ENCODE measurements at regions of chr5 and their contacts with region 1.

Region 1: GRCh38 chr5:58582803-58583491 is at the start of gene RAB3C:
- DNase-seq: peak; percentile 85 to 87 (median 86)
- H3K4me3 ChIP-seq: peak within 1 kb of the TSS; percentile 66 to 90 (median 81)
- H3K4me3 Mint-ChIP-seq: peak within 1 kb of the TSS; percentile 96 to 99
- H3K27ac ChIP-seq: no peak within 1 kb of the TSS
- H3K27ac Mint-ChIP-seq: peak within 1 kb of the TSS in 4 of 7 donors; percentile 11 to 85 (median 53)
- H3K4me1 ChIP-seq: peaks cover 18 to 24% of the 10 kb centered on the region in 2 donors
- H3K4me1 Mint-ChIP-seq: peaks cover 22% of the 10 kb centered on the region
- H3K27me3 ChIP-seq: peaks cover 42 to 56% of the 10 kb centered on the region in 2 donors
- H3K27me3 Mint-ChIP-seq: peaks cover 33 to 51% (median 39%) of the 10 kb centered on the region in 3 donors
- CTCF ChIP-seq: no peak
- polyA plus RNA-seq, gene RAB3C: under 0.01 to 0.81 TPM in 2 of 3 donors, not detected in the other

Region 2: DNA sequence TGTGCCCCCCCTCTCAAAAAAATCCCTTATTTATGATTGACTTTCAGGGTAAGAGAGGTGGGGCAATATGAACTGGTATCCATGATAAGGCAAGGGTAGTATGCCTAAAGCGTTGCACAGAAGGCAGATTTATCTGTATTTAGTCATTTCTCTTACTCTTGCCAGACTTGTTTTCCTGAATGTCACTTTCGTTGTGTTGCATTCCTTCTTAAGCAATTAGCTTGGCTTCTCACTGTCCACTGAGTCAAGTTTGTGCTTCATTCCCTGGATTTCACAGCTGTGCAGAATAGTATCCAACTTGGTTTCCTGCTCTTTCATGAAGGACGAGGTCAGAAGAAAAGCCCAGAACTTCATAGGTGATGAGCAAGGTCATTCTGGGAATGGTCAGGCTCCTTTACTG is 798.8 kb before region 1 on chr5:
- intact Hi-C with region 1: no loop called
- DNase-seq: no peak
- H3K4me3 ChIP-seq: no peak overlapping the region
- H3K4me3 Mint-ChIP-seq: no peak overlapping the region
- H3K27ac ChIP-seq: no peak overlapping the region
- H3K27ac Mint-ChIP-seq: no peak overlapping the region
- H3K4me1 ChIP-seq: no peaks in the 10 kb centered on the region
- H3K4me1 Mint-ChIP-seq: no peaks in the 10 kb centered on the region
- H3K27me3 ChIP-seq: no peaks in the 10 kb centered on the region
- H3K27me3 Mint-ChIP-seq: peaks cover 0 to 4% (median 3%) of the 10 kb centered on the region in 3 donors
- CTCF ChIP-seq: no peak

Region 3: DNA sequence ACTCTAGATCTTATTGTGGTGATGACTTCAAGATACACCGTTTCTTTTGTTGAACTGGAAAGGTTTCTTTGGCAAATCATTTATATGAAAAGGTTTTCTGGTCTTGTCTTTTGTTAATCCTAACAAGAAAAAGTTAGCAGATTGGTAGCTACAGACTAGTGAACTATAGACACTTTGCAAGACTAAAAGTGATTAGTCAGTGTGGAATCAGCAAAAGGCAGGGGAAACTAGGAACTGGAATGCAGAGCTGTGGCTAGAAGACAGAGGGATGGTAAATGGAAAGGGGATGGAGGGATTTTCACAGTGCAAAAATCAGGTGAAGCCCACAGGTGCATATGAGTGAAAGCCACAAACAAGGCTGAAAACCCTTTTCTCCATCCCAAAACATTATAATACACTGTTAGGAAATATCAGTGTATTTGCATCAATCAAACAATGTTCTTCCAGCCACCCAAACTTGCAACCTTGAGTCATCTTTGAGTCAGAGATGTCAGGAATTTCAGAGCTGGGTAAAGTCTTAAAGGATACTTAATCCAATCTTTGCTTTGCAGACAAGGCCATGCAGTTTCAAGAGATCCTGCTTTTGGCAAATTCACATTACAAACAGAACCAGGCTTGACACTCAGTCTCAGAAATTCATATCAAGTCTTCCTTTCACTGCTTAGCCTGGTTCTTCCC is 175.8 kb before region 1 on chr5:
- intact Hi-C with region 1: no loop called
- DNase-seq: no peak
- H3K4me3 ChIP-seq: no peak overlapping the region
- H3K4me3 Mint-ChIP-seq: no peak overlapping the region
- H3K27ac ChIP-seq: no peak overlapping the region
- H3K27ac Mint-ChIP-seq: no peak overlapping the region
- H3K4me1 ChIP-seq: peaks cover 0 to 4% of the 10 kb centered on the region in 2 donors
- H3K4me1 Mint-ChIP-seq: peaks cover 3% of the 10 kb centered on the region
- H3K27me3 ChIP-seq: no peaks in the 10 kb centered on the region
- H3K27me3 Mint-ChIP-seq: no peaks in the 10 kb centered on the region
- CTCF ChIP-seq: no peak

Region 4: GRCh38 chr5:58484505-58484904 is 98.4 kb before region 1 on chr5:
- intact Hi-C with region 1: loop called (anchors 10 kb)
- DNase-seq: peak in 2 of 3 donors; percentile 37 to 52
- H3K4me3 ChIP-seq: peak overlapping the region in 1 of 3 experiments; percentile 32
- H3K4me3 Mint-ChIP-seq: no peak overlapping the region
- H3K27ac ChIP-seq: peak overlapping the region; percentile 53 to 73
- H3K27ac Mint-ChIP-seq: peak overlapping the region; percentile 72 to 90 (median 86)
- H3K4me1 ChIP-seq: peaks cover 35 to 60% of the 10 kb centered on the region in 2 donors
- H3K4me1 Mint-ChIP-seq: peaks cover 7% of the 10 kb centered on the region
- H3K27me3 ChIP-seq: no peaks in the 10 kb centered on the region
- H3K27me3 Mint-ChIP-seq: no peaks in the 10 kb centered on the region
- CTCF ChIP-seq: no peak